Left cardiac atrium (tissue), 4 donors: ENCODE measurements at regions of chr17 and their contacts with region 1.

Region 1: DNA sequence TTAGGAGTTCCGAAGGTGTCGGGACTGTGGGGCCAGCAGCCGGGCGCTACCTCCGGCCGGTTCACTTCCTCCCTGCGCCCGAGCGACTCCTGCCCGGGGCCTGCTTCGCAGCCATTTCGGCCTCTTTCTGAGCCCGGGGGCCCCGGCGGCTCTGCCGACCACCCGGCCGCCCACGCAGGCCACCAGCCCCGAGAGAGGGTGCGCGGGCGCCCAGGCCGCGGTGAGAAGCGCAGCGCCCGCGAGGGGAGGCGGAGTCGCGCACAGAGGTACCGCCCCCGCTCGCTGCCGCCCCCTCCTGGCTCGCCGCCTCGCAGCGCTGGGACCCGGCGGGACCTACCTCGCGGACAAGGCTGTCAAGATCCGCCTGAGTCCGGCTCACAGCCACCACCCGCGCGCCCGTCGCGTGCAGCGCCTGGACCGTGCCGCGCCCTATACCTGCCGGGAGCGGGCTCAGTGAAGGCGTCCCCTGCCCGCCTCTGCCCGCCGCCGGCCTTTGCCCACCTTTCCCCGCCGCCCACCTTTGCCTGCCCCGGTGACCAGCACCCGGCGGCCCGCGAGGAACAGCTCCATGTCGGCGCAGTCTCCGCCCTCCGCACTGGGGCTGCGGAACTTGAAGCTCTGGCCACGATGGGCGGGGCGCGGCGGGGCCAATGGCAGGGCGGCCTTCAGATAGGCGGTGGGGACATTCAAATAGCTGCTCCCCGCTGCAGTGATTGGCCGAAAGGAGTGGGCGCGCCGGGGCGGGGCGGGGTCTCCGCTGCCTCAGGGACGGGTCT is at the start of gene DCXR:
- DNase-seq: peak; percentile 98
- ATAC-seq: peak; percentile 97 to 98
- total RNA-seq, gene DCXR: 132 to 161 TPM

Region 2: DNA sequence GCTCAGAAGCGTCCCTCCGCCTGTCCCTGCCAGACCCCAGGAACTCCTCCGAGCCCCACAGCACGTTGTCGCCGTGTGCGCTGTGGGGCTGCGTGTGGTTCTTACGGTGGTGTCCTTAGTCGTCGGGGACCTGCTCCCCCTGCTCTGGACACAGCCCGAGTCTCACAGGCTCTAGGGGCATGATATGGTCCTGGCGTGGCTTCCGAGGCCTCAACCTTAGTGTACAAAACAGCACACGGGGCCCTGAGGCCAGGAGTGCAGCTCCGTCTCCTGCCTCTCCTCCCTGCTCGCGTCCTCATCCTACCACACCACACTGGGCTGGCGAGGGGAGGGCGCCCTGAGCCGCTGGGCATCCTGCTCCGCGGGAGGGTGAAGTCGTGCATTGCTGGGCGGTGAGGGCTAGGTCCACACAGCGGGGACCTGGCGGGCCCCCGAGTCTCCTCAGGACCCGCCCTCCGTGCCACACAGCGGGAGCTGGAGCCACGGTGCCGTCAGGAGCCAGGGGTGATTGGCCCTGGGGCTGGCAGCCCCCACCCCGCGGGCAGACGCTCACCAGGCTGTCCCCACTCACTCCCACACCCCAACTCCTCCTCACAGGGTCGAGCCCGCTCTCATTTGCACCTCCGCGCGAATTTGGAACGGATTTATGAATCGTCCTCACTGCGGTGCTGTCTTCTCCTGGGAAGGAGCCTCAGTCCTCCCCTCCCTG is 108.6 kb before region 1 on chr17:
- intact Hi-C with region 1: no loop called
- DNase-seq: peak; percentile 20
- ATAC-seq: no peak

Region 3: DNA sequence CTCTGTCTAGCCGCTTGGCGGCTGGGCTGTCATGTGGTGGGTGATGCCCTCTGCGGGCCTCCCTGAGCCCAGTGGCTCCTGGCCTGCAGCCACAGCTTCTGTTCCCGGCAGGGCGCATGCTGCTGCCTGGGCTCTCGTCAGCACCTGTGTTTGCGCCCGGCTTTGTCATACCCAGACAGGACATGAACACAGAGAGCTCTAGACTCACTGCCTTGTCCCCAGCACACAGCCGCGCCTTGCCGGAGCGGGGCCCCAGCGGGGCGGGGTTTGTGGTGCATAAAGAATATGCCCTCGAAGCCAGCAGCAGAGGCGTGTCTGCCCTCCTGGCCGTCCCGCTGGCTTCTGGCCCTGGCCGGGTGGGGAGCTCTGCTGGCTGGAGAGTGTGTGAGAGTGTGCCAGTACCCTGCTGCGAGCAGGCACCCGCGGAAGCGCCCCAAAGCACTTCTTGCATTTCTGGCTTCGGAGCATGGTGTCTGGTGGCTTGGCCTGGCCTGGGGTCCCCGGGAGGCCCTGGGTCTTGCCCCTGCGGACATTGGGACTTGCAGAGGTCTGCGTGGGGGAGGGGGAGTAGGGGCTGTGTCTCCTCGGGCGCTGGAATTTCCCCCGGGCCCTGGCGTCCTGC is 45.5 kb before region 1 on chr17:
- intact Hi-C with region 1: no loop called
- DNase-seq: peak; percentile 76
- ATAC-seq: peak; percentile 88

Region 4: DNA sequence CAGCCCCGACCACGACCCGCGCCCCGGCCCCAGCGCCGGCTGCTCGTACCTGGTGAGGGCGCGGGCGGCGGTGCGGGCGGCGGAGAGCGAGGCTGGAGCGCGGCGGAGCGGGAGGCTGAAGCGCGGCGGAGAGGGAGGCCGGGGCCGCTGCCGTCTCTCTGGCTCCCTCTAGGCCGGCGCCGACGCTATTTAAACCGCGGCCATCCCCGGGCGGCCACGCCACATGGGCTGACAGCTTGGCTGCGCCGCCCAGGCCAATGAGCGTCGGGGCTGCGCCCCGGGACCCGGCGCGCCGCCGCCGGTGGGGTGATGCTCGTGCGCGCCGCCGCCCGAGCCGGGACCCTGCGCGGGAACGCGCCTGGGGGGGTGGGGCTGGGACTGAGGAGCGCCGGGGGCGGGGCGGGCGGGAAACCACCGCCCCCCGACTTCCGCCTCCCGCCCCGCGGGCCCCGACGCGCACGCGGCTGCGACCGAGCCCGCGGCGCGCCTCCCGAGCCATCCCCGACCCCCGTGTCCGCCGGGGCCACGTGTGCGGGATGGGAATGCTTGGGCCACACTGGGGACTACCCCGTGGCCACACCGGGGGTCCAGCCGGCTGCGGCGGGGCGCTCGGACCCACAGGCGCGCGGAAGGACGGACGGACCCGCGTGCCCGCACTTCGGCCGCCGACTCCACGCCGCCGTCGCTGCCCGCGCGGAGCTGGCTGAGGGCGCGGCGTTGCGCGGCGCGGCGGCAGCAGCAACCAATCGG is 60.9 kb after region 1 on chr17 and contains the start of gene FASN:
- intact Hi-C with region 1: loop called in 1 of 2 experiments (anchors 5 kb)
- DNase-seq: peak; percentile 95
- ATAC-seq: peak; percentile 76 to 82
- total RNA-seq, gene FASN: 220 to 646 TPM

Region 5: GRCh38 chr17:82257473-82257872 is 220.2 kb after region 1 on chr17:
- intact Hi-C with region 1: no loop called
- DNase-seq: no peak
- ATAC-seq: peak; percentile 23 to 82